Heart right ventricle (tissue), 16 donors: ENCODE measurements at regions of chr14 and their contacts with region 1.

Region 1: GRCh38 chr14:64971943-64972791 is at the start of gene RAB15:
- DNase-seq: peak; percentile 32 to 63
- ATAC-seq: peak; percentile 55 to 87 (median 70)
- H3K4me3 ChIP-seq: peak within 1 kb of the TSS; percentile 50 to 90 (median 75)
- H3K27ac ChIP-seq: peak within 1 kb of the TSS in 3 of 10 donors; percentile 53 to 54 (median 53)
- H3K4me1 ChIP-seq: peaks cover 3 to 20% (median 11%) of the 10 kb centered on the region in 9 donors
- H3K27me3 ChIP-seq: peaks cover 0 to 22% (median 0%) of the 10 kb centered on the region in 7 donors
- CTCF ChIP-seq: no peak
- total RNA-seq, gene RAB15: 11.2 to 94.3 (median 31.6) TPM

Region 2: DNA sequence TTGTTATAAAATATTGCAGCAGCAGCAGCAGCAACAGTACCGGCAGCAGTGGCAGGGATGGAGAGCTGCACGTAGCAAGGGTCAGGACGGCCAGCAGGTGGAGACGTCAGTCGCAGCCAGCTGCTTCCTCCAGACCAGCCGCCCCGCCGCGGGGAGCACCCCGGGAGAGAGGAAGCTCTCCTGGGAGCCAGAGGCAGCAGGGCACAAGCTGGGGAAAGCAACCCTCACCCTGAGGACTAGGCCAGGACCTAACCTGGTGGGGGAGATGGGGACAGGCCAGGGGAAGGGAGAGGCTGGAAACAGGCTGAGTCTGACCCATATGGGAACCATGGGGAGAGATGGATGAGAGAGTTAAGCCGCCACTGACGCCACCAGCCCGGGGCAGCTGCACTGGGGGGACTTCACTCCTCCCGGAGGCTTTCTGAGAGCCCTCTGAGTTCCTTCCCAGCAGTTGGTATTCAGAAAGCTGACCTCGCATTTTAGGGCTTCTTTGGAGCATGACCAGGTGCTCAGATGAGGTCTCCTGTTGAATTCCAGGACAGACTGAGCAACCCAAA is 148.8 kb before region 1 on chr14:
- intact Hi-C with region 1: loop called in 1 of 10 experiments (anchors 10 kb)
- DNase-seq: peak; percentile 73 to 80
- ATAC-seq: peak; percentile 81 to 91 (median 86)
- H3K4me3 ChIP-seq: peak overlapping the region in 1 of 10 donors; percentile 11
- H3K27ac ChIP-seq: peak overlapping the region in 4 of 10 donors; percentile 18 to 36 (median 24)
- H3K4me1 ChIP-seq: peaks cover 5 to 46% (median 29%) of the 10 kb centered on the region in 9 donors
- H3K27me3 ChIP-seq: peaks cover 0 to 3% (median 0%) of the 10 kb centered on the region in 7 donors
- CTCF ChIP-seq: peak; percentile 34 to 86 (median 79)

Region 3: GRCh38 chr14:64914237-64914971 is 57.8 kb before region 1 on chr14 and contains the start of gene CHURC1:
- intact Hi-C with region 1: loop called in 2 of 10 experiments (anchors 5 kb)
- DNase-seq: peak; percentile 97 to 99
- ATAC-seq: peak; percentile 98 to 100 (median 99)
- H3K4me3 ChIP-seq: peak within 1 kb of the TSS; percentile 71 to 99 (median 90)
- H3K27ac ChIP-seq: peak within 1 kb of the TSS; percentile 64 to 99 (median 94)
- H3K4me1 ChIP-seq: peaks cover 8 to 57% (median 35%) of the 10 kb centered on the region in 9 donors
- H3K27me3 ChIP-seq: peaks cover 0 to 2% (median 0%) of the 10 kb centered on the region in 7 donors
- CTCF ChIP-seq: no peak
- total RNA-seq, gene CHURC1: 59.2 to 98.8 (median 76.3) TPM

Region 4: GRCh38 chr14:64919622-64920021 is 52.5 kb before region 1 on chr14:
- intact Hi-C with region 1: loop called in 2 of 10 experiments (anchors 5 kb)
- DNase-seq: no peak
- ATAC-seq: no peak
- H3K4me3 ChIP-seq: no peak overlapping the region
- H3K27ac ChIP-seq: peak overlapping the region in 2 of 10 donors; percentile 24 to 36
- H3K4me1 ChIP-seq: peaks cover 12 to 61% (median 56%) of the 10 kb centered on the region in 9 donors
- H3K27me3 ChIP-seq: no peaks in the 10 kb centered on the region
- CTCF ChIP-seq: no peak

Region 5: GRCh38 chr14:65346947-65347346 is 374.8 kb after region 1 on chr14:
- intact Hi-C with region 1: loop called in 1 of 10 experiments (anchors 10 kb)
- DNase-seq: peak; percentile 17 to 29
- ATAC-seq: peak in 4 of 8 donors; percentile 58 to 82 (median 66)
- H3K4me3 ChIP-seq: no peak overlapping the region
- H3K27ac ChIP-seq: peak overlapping the region in 1 of 10 donors; percentile 74
- H3K4me1 ChIP-seq: peaks cover 0 to 7% (median 0%) of the 10 kb centered on the region in 9 donors
- H3K27me3 ChIP-seq: no peaks in the 10 kb centered on the region
- CTCF ChIP-seq: no peak